Cardiac septum (tissue), 1 donor: ENCODE measurements at regions of chr15 and their contacts with region 1.

Region 1: DNA sequence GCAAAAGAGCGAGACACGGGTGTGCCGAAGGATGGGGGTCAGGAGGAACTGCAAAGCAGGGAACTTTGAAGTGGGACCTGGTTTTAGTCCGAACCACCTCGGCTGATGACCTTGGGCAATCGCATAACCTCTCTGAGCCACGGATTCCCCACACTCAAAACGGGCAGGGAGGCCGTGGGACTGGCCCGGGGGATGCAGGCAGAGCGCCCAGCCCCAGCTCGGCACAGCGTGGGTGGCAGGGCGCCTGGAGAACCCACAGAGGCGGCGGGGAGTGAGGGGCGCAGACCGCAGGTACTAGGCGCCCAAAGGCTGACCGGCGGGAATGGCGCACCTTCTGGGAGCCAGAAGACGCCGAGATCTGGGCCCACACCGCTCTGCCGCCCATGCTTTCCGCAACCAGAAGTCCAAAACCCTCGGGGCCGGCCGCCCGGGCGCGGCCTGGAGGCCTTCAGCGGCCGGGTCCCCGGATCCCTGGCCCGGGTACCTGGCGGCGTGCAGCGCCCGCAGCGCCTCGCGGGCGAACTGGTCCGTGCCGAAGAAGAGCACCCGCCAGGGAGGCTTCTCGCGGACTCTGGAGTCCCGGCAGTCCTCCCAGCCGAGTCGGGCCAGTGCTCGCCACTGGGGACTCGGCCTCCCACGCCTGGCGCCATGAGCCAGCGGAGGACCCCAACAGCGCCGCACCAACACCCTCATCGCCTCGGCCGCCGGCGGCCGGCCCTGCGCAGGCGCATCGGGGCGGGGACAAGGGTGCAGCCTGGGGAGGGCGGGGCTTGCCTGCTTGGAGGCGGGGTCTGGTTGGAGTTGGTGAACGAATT is at the start of gene MTFMT:
- DNase-seq: peak; percentile 97
- total RNA-seq, gene MTFMT: 18.4 TPM

Region 2: DNA sequence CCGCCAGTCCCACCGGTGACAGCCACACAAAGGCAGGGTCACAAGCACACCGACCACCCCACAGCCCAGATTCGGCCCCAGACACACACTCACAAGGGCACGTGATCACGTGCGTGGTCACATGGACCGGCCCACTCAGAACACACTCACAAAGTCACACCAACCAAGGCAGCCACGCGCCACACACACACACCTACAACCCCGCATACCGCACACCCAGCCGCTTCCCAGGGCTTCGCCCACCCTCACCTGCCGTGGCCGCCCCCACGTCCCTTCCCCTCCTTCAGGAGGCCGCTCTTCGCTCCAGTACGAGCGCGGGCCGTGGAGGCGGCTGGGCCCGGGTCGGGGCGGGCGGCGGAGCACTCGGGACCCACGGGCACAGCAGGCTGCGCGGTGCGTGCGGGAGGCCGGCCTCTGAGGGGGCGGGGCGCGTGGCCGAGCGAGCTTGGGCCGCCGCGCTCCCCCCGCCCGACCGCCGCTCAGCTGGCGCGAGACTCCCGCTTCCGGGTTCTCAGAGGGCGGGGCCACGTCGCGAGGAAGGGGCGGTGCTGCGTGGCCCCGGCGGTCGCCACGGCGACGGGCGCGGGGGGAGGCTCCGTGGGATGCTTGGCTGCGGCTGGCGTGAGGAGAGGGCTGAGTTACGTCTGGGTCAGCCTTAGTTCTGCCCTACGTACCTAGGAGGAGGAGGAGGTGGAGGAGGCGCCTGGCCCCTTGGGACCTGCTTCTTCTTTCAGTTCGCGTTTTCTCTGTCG is 39.5 kb before region 1 on chr15 and contains the start of gene SPG21:
- intact Hi-C with region 1: loop called (anchors 5 kb)
- DNase-seq: peak; percentile 97
- total RNA-seq, gene SPG21: 53.6 TPM

Region 3: DNA sequence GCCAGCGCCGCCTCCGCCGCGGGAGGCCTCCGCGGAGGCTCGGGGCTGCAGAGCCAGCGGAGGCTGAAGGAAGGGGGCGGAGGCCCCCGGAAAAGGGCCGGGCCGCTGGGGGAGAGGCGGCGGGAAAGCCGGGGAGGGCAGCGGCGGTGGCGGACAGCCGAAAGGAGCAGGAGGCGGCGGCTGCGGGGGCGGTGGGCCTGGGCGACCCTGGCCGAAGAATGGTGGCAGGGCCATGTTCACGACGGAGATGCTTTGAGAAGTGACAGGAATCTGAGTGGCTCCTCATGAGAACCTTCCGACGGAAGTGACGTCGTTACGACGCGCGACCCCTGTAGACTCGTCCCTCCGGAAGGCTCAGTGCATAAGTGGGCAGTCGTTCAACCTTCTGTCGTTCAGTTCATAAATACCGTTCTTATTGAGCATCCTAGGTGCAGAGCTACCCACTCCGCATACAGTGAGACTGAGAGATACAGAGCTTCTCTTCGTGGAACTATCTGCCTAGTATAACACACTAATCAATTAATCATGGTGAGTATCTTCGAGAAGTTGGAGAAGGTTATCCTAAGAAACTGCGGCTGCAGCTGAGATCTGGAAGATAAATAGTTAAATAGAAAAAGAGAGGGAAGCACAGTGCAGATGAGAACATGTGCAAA is 104.5 kb after region 1 on chr15 and contains the start of gene PDCD7:
- intact Hi-C with region 1: no loop called
- DNase-seq: peak; percentile 89
- total RNA-seq, gene PDCD7: 17.4 TPM

Region 4: DNA sequence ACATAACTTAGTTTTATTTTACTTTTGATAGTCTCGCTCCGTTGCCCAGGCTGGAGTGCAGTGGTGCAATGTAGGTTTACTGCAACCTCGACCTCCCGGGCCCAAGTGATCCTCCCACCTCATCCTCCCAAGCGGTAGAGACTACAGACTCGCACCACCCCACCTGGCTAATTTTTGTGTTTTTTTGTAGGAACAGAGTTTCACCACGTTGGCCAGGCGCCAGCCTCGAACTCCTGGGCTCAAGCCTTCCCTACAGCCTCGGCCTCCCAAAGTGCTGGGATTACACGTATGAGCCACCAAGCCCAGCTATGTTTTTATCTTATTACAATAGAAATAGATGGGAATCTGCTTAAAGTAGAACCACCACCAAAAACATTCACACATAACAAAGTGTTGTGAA is 269.6 kb after region 1 on chr15:
- intact Hi-C with region 1: loop called (anchors 5 kb)
- DNase-seq: no peak